Activated naive CD4-positive, alpha-beta T cell treated with anti-CD3 and anti-CD28 coated beads, Interleukin-2, amount 10 ng/mL, durations not matched to agents 7 days and 5 days (primary cell): ENCODE measurements at regions of chr14 and their contacts with region 1.

Region 1: GRCh38 chr14:91114079-91115065 is 499 bp downstream of the DGLUCY start:
- DNase-seq: peak; percentile 82
- H3K4me3 Mint-ChIP-seq: peak overlapping the region; percentile 83
- H3K27ac Mint-ChIP-seq: peak overlapping the region; percentile 93
- H3K4me1 Mint-ChIP-seq: peaks cover 75% of the 10 kb centered on the region
- H3K27me3 Mint-ChIP-seq: no peaks in the 10 kb centered on the region

Region 2: GRCh38 chr14:91060351-91061055 is 53.9 kb before region 1 on chr14 and contains the start of gene RPS6KA5:
- CTCF ChIA-PET with region 1: interaction called, 32 read pairs
- DNase-seq: peak; percentile 100
- H3K4me3 Mint-ChIP-seq: peak within 1 kb of the TSS; percentile 85
- H3K27ac Mint-ChIP-seq: peak within 1 kb of the TSS; percentile 81
- H3K4me1 Mint-ChIP-seq: peaks cover 63% of the 10 kb centered on the region
- H3K27me3 Mint-ChIP-seq: no peaks in the 10 kb centered on the region

Region 3: DNA sequence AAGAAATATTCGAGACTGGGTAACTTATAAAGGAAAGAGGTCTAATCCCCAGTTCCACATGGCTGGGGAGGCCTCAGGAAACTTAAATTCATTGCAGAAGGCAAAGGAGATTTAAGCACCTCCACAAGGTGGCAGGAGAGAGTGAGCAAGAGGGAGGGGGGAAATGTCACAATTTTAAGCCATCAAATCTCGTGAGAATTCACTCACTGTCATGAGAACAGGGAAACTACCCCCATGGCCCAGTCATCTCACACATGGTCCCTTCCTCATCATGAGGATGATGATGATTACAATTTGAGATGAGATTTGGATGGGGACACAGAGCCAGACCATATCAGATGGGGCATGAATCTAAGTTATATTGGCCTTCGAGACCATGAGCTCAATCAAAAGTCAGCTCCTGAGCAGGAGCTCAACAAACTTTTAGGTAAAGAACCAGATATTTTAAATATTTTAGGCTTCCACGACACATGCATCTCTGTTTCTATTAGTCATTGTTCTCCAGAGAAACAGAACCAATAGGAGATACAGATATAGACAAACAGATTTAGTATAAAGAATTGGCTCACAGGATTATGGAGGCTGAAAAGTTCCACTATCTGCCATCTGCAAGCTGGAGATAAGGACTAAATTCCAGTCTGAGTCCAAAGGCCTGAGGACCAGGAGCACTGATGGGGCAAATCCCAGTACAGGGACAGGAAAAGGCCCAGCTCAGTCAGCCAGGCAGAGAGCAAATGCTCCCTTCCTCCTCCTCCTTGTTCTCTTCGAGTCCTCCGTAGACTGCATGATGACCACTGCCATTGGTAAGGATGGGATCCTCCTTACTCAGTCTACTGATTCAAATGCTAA is 24.4 kb after region 1 on chr14:
- CTCF ChIA-PET with region 1: interaction called, 19 read pairs
- DNase-seq: peak; percentile 67
- H3K4me3 Mint-ChIP-seq: no peak overlapping the region
- H3K27ac Mint-ChIP-seq: peak overlapping the region; percentile 53
- H3K4me1 Mint-ChIP-seq: peaks cover 59% of the 10 kb centered on the region
- H3K27me3 Mint-ChIP-seq: no peaks in the 10 kb centered on the region